Common myeloid progenitor, CD34-positive (primary cell): ENCODE measurements at regions of chr2 and their contacts with region 1.

Region 1: DNA sequence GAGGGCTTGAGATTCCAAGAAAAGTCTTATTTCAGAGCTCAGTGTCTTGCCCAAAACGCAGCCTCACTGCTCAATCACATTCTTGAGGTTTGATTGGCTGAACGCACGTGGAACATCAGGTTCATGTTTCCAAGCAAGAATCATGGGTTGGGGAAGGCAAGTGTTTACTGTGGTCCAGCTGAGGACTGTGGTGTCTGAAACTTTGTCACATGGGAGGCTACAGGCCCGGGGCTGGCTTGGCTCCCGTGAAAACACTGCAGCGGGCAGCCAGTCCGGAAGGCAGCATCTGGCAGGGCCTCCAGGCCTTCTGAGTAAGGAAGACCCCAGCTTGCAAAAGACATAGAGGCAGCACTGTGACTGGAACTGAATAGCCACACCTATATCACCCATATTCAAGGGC is 84.7 kb downstream of the POLR1A start:
- DNase-seq: no peak
- H3K4me3 ChIP-seq: no peak overlapping the region
- H3K27ac ChIP-seq: no peak overlapping the region
- H3K4me1 ChIP-seq: peaks cover 0 to 8% (median under 1%) of the 10 kb centered on the region in 4 experiments
- H3K27me3 ChIP-seq: no peaks in the 10 kb centered on the region

Region 2: DNA sequence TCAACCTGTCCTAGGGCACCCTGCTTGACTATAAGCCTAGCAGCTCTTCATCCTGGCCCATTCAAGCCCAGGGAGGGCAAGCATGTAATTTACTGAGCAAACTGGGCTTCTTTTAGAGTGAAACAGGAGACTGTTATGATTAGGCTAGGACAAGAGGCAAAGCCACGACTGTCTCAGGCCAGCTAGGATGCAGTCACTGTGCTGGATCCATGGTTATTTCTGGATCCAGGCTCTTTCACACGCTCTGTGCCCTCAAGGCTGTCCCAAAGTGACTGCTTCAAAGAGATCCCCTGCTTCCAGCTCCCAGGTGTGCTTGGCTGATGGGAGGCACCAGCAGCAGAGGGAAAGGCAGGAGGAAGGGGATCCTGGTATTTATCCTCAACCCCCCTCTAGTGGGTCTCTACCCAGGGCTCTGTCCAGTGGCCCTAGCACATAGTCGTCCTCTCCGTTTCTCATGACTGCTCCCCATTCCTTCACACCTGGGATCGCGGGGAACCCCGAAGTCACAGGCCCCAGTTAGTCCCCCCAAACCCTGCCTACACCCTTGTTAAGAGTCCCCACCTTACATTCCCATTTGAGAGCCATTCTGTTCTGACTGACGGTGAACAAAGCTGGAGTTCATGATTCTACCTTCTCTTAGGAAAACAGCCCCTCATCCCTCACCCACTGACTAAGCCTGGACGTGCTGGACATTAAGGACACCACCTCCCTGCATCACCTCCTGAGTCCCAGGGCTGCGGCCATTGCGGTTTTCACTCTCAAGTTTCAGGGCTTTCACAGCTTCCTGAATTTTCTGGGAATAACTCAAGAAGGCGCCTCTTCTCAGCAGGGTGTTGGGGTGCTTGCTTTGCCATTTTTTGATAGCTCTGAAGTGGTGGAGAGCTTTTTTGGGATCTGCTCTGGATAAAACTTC is 21.5 kb after region 1 on chr2:
- CTCF ChIA-PET with region 1: interaction called, 10 read pairs
- POLR2A ChIA-PET with region 1: interaction called, 4 read pairs
- DNase-seq: no peak
- H3K4me3 ChIP-seq: no peak overlapping the region
- H3K27ac ChIP-seq: no peak overlapping the region
- H3K4me1 ChIP-seq: peaks cover 14 to 22% (median 18%) of the 10 kb centered on the region in 4 experiments
- H3K27me3 ChIP-seq: no peaks in the 10 kb centered on the region